Motor neuron (in vitro differentiated cells): ENCODE measurements at regions of chr1 and their contacts with region 1.

Region 1: GRCh38 chr1:182084487-182085316 is 23.2 kb upstream of the ZNF648 start:
- ATAC-seq: peak; percentile 65 to 98 (median 96)
- H3K4me3 ChIP-seq: no peak overlapping the region
- H3K27ac ChIP-seq: peak overlapping the region in 1 of 2 donors; percentile 1
- H3K4me1 ChIP-seq: peaks cover 0 to 4% of the 10 kb centered on the region in 2 donors

Region 2: DNA sequence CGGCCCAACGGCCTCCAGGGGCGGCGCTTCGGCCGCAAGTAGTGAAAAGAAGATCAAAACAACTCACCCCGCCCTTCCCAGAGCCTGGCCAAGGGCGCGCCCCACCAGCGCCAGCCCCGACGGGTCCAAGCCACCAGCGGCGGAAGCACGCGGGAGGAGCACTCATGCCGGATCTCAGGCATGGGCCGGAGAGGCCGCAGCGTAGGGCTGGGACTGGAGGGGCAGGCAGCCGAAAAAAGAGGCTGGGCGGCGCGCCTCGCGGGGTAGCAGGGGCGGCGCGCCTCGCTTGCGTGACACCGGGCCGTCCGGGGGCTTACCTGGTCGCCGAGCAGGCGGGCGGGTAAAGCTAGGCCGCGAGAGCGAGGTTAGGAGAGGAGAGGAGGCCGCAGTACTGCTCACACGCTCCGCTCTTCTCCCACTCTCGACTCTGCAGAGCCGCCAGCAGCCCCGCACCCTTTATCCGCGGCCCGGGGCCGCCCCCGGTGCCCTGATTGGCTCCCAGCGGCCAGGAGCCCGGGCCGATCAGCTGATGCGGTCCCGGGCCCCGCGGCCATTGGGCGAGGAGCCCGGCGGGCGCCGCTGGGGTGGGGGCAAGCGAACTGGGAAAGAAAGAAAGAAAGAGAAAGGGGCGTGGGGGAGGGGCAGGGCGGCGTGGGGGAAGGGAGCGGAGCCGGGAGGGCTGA is 306.8 kb after region 1 on chr1 and contains the start of gene GLUL:
- in situ Hi-C with region 1: loop called in 5 of 9 experiments (anchors 5 to 10 kb)
- ATAC-seq: peak; percentile 84 to 94 (median 91)
- H3K4me3 ChIP-seq: peak within 1 kb of the TSS; percentile 84 to 98 (median 94)
- H3K27ac ChIP-seq: peak within 1 kb of the TSS; percentile 92
- H3K4me1 ChIP-seq: peaks cover 7 to 20% of the 10 kb centered on the region in 2 donors
- total RNA-seq, gene GLUL: 49.0 to 392 (median 167) TPM

Region 3: GRCh38 chr1:182397771-182398393 is 313.2 kb after region 1 on chr1:
- in situ Hi-C with region 1: loop called in 6 of 9 experiments (anchors 5 to 10 kb)
- ATAC-seq: no peak
- H3K4me3 ChIP-seq: no peak overlapping the region
- H3K27ac ChIP-seq: no peak overlapping the region
- H3K4me1 ChIP-seq: peaks cover 2 to 9% of the 10 kb centered on the region in 2 donors

Region 4: DNA sequence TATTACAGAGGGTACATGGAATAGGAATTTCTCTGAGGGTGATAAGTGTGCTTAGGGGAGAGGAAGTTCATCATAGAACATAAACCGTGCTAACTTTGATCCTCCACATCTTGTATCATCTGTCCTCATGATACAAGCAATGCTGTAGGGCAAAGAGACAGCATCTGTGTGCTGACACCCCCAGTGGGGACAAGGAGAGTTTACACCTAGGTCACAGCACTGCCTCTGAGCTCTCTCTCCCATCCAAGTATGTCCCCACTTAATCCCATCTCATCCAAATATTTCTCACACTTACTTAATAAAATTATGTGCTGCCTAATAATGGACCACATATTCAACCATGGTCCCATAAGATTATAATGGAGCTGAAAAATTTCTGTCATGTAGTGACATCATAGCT is 320.1 kb after region 1 on chr1:
- in situ Hi-C with region 1: loop called in 6 of 9 experiments (anchors 5 to 10 kb)
- ATAC-seq: peak in 1 of 8 experiments; percentile 76
- H3K4me3 ChIP-seq: no peak overlapping the region
- H3K27ac ChIP-seq: no peak overlapping the region
- H3K4me1 ChIP-seq: no peaks in the 10 kb centered on the region

Region 5: DNA sequence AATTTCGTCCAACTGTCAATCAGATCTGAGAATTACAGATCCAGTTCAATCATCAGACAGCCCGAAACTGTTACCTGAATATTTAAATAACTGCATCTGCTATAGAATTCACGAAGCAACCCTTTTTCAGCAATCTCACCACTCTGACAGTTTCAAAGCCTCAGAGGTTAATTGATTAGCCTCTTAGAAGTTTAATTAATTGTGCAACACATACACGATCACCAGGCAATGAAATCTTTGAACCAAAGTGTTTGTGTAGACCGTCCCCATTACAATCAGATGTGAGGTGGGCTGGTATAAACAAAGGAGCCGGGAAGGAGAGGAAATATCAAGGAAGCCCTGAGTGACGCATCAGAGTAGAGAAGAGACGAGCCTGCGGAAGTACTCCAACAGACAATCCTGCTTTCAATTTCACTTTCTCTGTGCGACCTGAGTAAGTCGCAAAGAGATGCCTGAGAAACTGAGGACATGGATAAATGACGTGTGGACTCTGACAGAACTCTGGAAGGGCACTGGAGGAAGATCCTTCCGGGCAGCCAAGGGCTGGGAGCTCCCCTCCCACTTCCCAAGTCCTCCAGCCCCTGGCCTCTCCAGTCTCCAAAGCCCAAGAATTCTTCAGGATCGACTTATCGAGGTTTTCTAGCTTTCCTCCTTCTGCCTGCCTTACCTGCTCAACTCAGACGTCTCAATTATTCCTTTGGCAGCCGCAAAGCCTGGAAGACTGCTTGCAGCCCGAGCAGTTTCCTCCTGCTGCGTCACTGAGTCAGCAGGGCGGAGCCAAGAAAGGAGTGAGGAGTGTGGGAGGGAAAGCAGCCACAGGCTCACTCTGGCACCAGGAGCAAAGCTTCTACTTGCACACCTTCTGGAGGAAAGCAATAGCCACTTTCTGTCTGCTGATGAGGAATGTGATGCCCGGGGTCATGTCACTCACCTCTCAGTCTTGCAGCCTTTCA is 504.1 kb after region 1 on chr1 and contains the start of gene RNASEL:
- in situ Hi-C with region 1: loop called in 3 of 9 experiments (anchors 25 kb)
- ATAC-seq: peak; percentile 80 to 97 (median 94)
- H3K4me3 ChIP-seq: peak within 1 kb of the TSS; percentile 15 to 38 (median 33)
- H3K27ac ChIP-seq: peak within 1 kb of the TSS in 1 of 2 donors; percentile 48
- H3K4me1 ChIP-seq: peaks cover 3 to 10% of the 10 kb centered on the region in 2 donors
- total RNA-seq, gene RNASEL: 2.5 to 7.9 (median 4.8) TPM

Region 6: GRCh38 chr1:182789138-182790076 is 704.7 kb after region 1 on chr1 and contains the start of gene NPL:
- in situ Hi-C with region 1: loop called in 3 of 9 experiments (anchors 25 kb)
- ATAC-seq: peak; percentile 93 to 98 (median 98)
- H3K4me3 ChIP-seq: peak within 1 kb of the TSS; percentile 49 to 68 (median 60)
- H3K27ac ChIP-seq: no peak within 1 kb of the TSS
- H3K4me1 ChIP-seq: peaks cover 3 to 8% of the 10 kb centered on the region in 2 donors
- total RNA-seq, gene NPL: 2.3 to 10.1 (median 4.0) TPM